CD8-positive, alpha-beta T cell (primary cell): ENCODE measurements at regions of chr6 and their contacts with region 1.

Region 1: GRCh38 chr6:37396476-37397180 is 36.4 kb upstream of the CMTR1 start:
- DNase-seq: no peak
- ATAC-seq: no peak
- H3K4me3 ChIP-seq: no peak overlapping the region
- H3K4me3 Mint-ChIP-seq: no peak overlapping the region
- H3K27ac ChIP-seq: no peak overlapping the region
- H3K27ac Mint-ChIP-seq: no peak overlapping the region
- H3K4me1 ChIP-seq: no peaks in the 10 kb centered on the region
- H3K4me1 Mint-ChIP-seq: no peaks in the 10 kb centered on the region
- H3K27me3 ChIP-seq: no peaks in the 10 kb centered on the region
- H3K27me3 Mint-ChIP-seq: no peaks in the 10 kb centered on the region
- CTCF ChIP-seq: no peak

Region 2: GRCh38 chr6:36793913-36794712 is 602.5 kb before region 1 on chr6:
- CTCF ChIA-PET with region 1: no interaction called
- POLR2A ChIA-PET with region 1: no interaction called
- intact Hi-C with region 1: loop called in 1 of 2 experiments (anchors 5 kb)
- DNase-seq: no peak
- ATAC-seq: no peak
- H3K4me3 ChIP-seq: no peak overlapping the region
- H3K4me3 Mint-ChIP-seq: no peak overlapping the region
- H3K27ac ChIP-seq: no peak overlapping the region
- H3K27ac Mint-ChIP-seq: no peak overlapping the region
- H3K4me1 ChIP-seq: no peaks in the 10 kb centered on the region
- H3K4me1 Mint-ChIP-seq: peaks cover under 1% of the 10 kb centered on the region
- H3K27me3 ChIP-seq: no peaks in the 10 kb centered on the region
- H3K27me3 Mint-ChIP-seq: peaks cover 5% of the 10 kb centered on the region
- CTCF ChIP-seq: no peak

Region 3: GRCh38 chr6:37381579-37381978 is 15.0 kb before region 1 on chr6:
- CTCF ChIA-PET with region 1: interaction called, 4 read pairs
- POLR2A ChIA-PET with region 1: interaction called, 3 read pairs
- intact Hi-C with region 1: loop called in 1 of 2 experiments (anchors 1 kb)
- DNase-seq: peak in 4 of 9 experiments; percentile 10 to 71 (median 42)
- ATAC-seq: peak; percentile 34
- H3K4me3 ChIP-seq: no peak overlapping the region
- H3K4me3 Mint-ChIP-seq: no peak overlapping the region
- H3K27ac ChIP-seq: no peak overlapping the region
- H3K27ac Mint-ChIP-seq: no peak overlapping the region
- H3K4me1 ChIP-seq: no peaks in the 10 kb centered on the region
- H3K4me1 Mint-ChIP-seq: no peaks in the 10 kb centered on the region
- H3K27me3 ChIP-seq: no peaks in the 10 kb centered on the region
- H3K27me3 Mint-ChIP-seq: no peaks in the 10 kb centered on the region
- CTCF ChIP-seq: peak; percentile 40